AG04449 (cell line): ENCODE measurements at regions of chr10 and their contacts with region 1.

Region 1: GRCh38 chr10:97534746-97535367 is 36.1 kb downstream of the UBTD1 start:
- DNase-seq: no peak
- H3K4me3 ChIP-seq: no peak overlapping the region
- CTCF ChIP-seq: peak; percentile 56

Region 2: GRCh38 chr10:97128516-97129154 is 406.2 kb before region 1 on chr10:
- CTCF ChIA-PET with region 1: no interaction called
- POLR2A ChIA-PET with region 1: no interaction called
- DNase-seq: no peak
- H3K4me3 ChIP-seq: no peak overlapping the region
- CTCF ChIP-seq: no peak

Region 3: DNA sequence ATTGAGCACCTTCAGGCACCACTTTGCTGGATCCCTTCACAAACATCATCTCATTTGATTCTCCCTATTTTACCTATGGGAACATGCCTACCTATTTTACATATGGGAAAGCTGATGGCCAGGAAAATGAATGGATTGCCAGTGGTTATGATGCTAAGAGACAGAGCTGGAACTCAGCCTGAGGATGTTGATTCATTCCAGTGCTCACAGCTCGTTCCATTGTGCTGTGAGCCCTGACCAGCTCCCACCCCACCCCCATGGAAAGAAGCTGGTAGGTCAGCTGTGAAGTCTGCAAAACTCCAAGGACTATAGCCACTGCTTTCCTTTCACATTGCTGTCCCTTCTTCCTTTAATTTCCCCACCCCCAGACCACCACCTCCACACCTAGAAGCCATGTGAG is 26.5 kb before region 1 on chr10:
- CTCF ChIA-PET with region 1: interaction called, 20 read pairs
- POLR2A ChIA-PET with region 1: no interaction called
- DNase-seq: no peak
- H3K4me3 ChIP-seq: no peak overlapping the region
- CTCF ChIP-seq: no peak

Region 4: DNA sequence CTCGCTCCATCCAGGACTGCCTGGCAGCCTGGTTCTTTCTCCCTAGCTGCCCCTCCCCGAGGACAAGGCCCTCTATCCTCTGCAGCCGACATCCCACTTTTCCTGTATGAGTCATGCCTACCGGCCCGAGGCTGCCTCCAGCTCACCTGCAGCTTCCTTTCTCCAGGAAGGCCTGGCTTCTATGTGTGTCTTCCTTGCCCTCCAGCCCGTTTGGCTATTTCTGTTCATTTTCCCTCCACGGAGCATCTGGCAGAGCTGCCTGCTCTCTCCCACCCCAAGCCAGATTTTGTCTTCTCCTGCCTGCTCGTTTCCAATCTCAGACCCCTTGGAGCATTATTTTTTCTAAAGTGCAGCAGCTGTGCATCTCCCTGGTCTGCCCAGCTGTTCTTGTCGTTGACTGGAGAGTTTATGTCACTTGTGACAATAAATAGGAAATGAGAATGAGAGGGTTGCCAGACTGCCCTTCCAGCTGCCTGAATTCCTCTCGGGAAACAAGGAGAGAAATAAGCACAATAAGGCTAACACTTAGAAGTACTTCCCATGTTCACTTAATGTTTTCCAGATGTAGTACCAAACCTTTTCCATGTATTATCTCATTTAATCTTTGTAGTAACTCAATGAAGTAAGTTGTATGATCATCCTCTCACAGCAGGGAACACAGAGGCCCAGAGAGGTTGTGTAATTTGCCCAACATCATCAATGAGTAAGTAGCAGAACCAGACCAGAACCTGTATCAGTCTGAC is 16.4 kb before region 1 on chr10:
- CTCF ChIA-PET with region 1: interaction called, 36 read pairs
- POLR2A ChIA-PET with region 1: interaction called, 5 read pairs
- DNase-seq: no peak
- H3K4me3 ChIP-seq: no peak overlapping the region
- CTCF ChIP-seq: no peak